Activated T-helper 2 cell treated with anti-CD3 and anti-CD28 coated beads, Interferon-gamma antibody, Interleukin-2, Interleukin-4, amounts not matched to agents 10 μg/mL and 5 μg/mL and 100 μg/mL, durations not matched to agents 14 hours and 24 hours and 36 hours (primary cell): ENCODE measurements at regions of chr14 and their contacts with region 1.

Region 1: DNA sequence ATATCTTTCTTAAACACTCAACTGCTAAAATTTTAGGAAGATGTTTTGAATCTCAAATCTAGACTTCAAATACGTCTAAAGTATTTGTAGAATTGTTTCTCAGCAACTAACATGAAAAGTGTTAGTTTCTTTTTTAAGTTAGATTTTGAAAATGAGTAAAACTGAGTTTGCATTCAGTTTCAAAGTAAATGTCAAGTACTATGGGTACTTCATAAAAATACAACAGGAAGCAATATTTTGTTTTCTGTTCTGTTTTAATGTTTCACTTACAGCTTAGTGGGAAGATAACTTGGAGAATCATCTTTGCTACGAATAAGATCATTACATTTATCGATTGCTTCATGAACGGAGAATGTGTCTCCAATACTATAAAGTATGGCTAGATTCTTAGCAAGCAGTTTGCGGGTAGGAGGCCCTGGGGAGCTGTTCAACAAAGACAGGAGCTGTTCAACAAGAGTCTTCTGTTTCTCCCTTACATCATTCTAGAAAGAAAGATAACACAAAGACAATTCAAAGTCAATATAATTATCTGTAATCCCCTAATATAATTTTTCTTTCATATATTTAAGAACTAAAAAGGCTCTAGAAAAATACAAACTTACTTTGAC is 20.2 kb downstream of the HEATR5A start:
- DNase-seq: no peak
- H3K4me3 Mint-ChIP-seq: no peak overlapping the region
- H3K27ac Mint-ChIP-seq: peak overlapping the region; percentile 75
- H3K4me1 Mint-ChIP-seq: peaks cover 25% of the 10 kb centered on the region
- H3K27me3 Mint-ChIP-seq: no peaks in the 10 kb centered on the region

Region 2: GRCh38 chr14:31388687-31389413 is 11.3 kb before region 1 on chr14:
- intact Hi-C with region 1: loop called (anchors 1 kb)
- DNase-seq: no peak
- H3K4me3 Mint-ChIP-seq: no peak overlapping the region
- H3K27ac Mint-ChIP-seq: peak overlapping the region; percentile 73
- H3K4me1 Mint-ChIP-seq: peaks cover 30% of the 10 kb centered on the region
- H3K27me3 Mint-ChIP-seq: no peaks in the 10 kb centered on the region

Region 3: GRCh38 chr14:31787381-31787780 is 387.2 kb after region 1 on chr14:
- intact Hi-C with region 1: no loop called
- DNase-seq: no peak
- H3K4me3 Mint-ChIP-seq: no peak overlapping the region
- H3K27ac Mint-ChIP-seq: no peak overlapping the region
- H3K4me1 Mint-ChIP-seq: no peaks in the 10 kb centered on the region
- H3K27me3 Mint-ChIP-seq: no peaks in the 10 kb centered on the region